ENCODE measurements at regions of chr16 and their contacts with region 1.

Region 1: DNA sequence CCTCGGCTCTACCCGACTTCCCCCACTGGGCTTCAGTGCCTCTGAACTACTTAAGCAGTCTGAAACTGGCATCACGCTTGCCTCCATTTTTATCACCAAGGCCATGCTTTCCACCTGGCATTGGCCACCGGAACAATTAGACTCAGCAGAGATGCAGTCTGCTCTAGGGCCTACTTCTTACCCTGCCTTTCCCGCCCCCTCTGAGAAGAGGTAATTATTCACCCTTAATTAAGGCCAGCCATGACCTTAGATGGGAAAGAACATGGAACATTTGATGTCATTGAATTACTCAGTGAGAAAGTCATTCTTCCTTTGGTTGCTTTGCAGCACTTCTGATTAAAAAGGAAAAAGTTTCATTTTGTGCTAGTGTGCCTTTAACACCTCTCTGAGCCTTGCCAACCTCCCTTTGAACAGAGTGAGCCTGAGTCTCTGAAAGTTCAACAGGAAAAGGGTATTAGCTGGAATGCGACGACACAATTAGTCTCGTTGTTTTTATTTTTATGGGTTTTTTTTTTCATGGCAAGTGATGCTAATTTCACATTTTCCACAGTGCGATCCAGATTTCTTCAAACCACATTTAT is 60.9 kb upstream of the TNRC6A start:
- DNase-seq: peak; percentile 76
- ATAC-seq: peak; percentile 80
- H3K4me3 Mint-ChIP-seq: peak overlapping the region; percentile 47
- H3K27ac Mint-ChIP-seq: peak overlapping the region; percentile 87
- H3K4me1 Mint-ChIP-seq: peaks cover 57% of the 10 kb centered on the region
- H3K27me3 Mint-ChIP-seq: peaks cover 13% of the 10 kb centered on the region

Region 2: GRCh38 chr16:23678430-23679273 is 989.9 kb before region 1 on chr16 and contains the start of gene PLK1:
- CTCF ChIA-PET with region 1: no interaction called
- POLR2A ChIA-PET with region 1: no interaction called
- intact Hi-C with region 1: loop called in 1 of 2 experiments (anchors 10 kb)
- DNase-seq: peak; percentile 93
- ATAC-seq: peak; percentile 97
- H3K4me3 Mint-ChIP-seq: peak within 1 kb of the TSS; percentile 95
- H3K27ac Mint-ChIP-seq: peak within 1 kb of the TSS; percentile 60
- H3K4me1 Mint-ChIP-seq: peaks cover 16% of the 10 kb centered on the region
- H3K27me3 Mint-ChIP-seq: no peaks in the 10 kb centered on the region
- total RNA-seq, gene PLK1: 91.4 to 120 TPM

Region 3: GRCh38 chr16:23959072-23959751 is 709.4 kb before region 1 on chr16:
- CTCF ChIA-PET with region 1: no interaction called
- POLR2A ChIA-PET with region 1: no interaction called
- intact Hi-C with region 1: loop called in 1 of 2 experiments (anchors 5 kb)
- DNase-seq: no peak
- ATAC-seq: peak; percentile 49
- H3K4me3 Mint-ChIP-seq: peak overlapping the region; percentile 54
- H3K27ac Mint-ChIP-seq: peak overlapping the region; percentile 79
- H3K4me1 Mint-ChIP-seq: peaks cover 77% of the 10 kb centered on the region
- H3K27me3 Mint-ChIP-seq: no peaks in the 10 kb centered on the region

Region 4: DNA sequence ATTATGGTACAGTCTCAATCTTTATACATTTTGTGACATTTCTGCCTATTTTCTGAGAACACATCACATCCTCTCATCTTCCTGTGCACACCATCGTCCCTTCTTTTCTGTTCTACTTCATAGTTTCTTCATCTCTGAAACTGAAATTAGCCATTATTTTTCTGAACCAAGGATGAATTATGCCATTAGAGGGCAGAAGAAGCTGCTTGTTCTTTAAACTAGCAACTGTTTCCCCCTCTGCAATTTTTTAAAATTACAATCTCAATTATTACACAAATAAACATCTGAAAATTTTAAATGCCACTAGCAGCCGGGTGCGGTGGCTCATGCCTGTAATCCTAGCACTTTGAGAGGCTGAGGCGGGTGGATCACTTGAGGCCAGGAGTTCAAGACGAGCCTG is 87.9 kb before region 1 on chr16:
- CTCF ChIA-PET with region 1: no interaction called
- POLR2A ChIA-PET with region 1: no interaction called
- intact Hi-C with region 1: loop called in 1 of 2 experiments (anchors 10 kb)
- DNase-seq: no peak
- ATAC-seq: no peak
- H3K4me3 Mint-ChIP-seq: no peak overlapping the region
- H3K27ac Mint-ChIP-seq: no peak overlapping the region
- H3K4me1 Mint-ChIP-seq: peaks cover 8% of the 10 kb centered on the region
- H3K27me3 Mint-ChIP-seq: peaks cover 9% of the 10 kb centered on the region

Region 5: GRCh38 chr16:24753437-24753836 is 84.9 kb after region 1 on chr16:
- CTCF ChIA-PET with region 1: interaction called, 5 read pairs
- POLR2A ChIA-PET with region 1: interaction called, 5 read pairs
- intact Hi-C with region 1: loop called in 1 of 2 experiments (anchors 1 kb)
- DNase-seq: peak; percentile 48
- ATAC-seq: peak; percentile 95
- H3K4me3 Mint-ChIP-seq: peak overlapping the region; percentile 38
- H3K27ac Mint-ChIP-seq: peak overlapping the region; percentile 88
- H3K4me1 Mint-ChIP-seq: peaks cover 64% of the 10 kb centered on the region
- H3K27me3 Mint-ChIP-seq: no peaks in the 10 kb centered on the region

Region 6: GRCh38 chr16:25045696-25046381 is 377.3 kb after region 1 on chr16:
- CTCF ChIA-PET with region 1: no interaction called
- POLR2A ChIA-PET with region 1: no interaction called
- intact Hi-C with region 1: loop called in 1 of 2 experiments (anchors 2 kb)
- DNase-seq: no peak
- ATAC-seq: no peak
- H3K4me3 Mint-ChIP-seq: no peak overlapping the region
- H3K27ac Mint-ChIP-seq: no peak overlapping the region
- H3K4me1 Mint-ChIP-seq: peaks cover 43% of the 10 kb centered on the region
- H3K27me3 Mint-ChIP-seq: no peaks in the 10 kb centered on the region